ENCODE measurements at regions of chr3 and their contacts with region 1.

Region 1: GRCh38 chr3:171829841-171830517 is 13.2 kb upstream of the TMEM212 start:
- H3K4me3 Mint-ChIP-seq: no peak overlapping the region
- H3K27ac Mint-ChIP-seq: peak overlapping the region; percentile 39
- H3K4me1 Mint-ChIP-seq: peaks cover 37% of the 10 kb centered on the region
- H3K27me3 Mint-ChIP-seq: no peaks in the 10 kb centered on the region

Region 2: DNA sequence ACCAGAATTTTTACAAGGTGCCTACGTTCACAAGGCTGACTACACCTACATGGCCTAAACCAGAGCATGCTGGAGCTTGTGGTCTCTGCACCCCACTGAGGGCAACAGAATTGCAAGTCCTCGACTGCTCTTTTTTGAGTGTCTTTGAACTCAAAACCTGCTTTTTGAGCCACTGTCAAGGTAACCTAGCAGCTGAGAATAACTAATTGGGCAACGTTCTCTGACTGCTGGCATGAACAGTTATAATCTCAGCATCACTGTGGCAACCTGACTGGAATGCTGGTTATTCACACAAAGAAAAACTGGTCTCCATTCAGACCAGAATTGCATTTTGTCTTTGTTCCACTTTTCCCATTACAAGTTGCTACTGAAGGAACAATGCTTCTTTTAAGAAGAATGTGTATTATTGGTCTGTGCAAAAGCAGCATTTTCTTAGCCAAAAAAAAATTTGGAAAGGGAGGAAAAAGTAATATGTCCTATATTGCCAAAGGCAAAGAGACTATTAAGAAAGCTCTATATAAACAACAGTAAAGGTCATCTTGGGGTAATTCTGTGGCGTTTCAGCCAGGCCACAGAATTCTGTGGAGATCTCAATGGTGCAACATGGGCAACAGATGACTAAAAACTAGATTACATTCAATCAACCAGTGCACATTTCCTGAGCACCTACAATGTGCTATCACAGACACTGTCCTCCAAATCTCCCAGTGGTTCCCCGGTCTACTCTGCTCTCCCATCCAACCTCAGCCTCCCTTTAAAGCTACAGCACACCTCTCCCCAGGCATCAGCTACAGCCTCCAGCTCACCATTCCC is 446.6 kb before region 1 on chr3:
- intact Hi-C with region 1: no loop called
- H3K4me3 Mint-ChIP-seq: no peak overlapping the region
- H3K27ac Mint-ChIP-seq: no peak overlapping the region
- H3K4me1 Mint-ChIP-seq: peaks cover 16% of the 10 kb centered on the region
- H3K27me3 Mint-ChIP-seq: no peaks in the 10 kb centered on the region

Region 3: GRCh38 chr3:171748064-171748918 is 81.7 kb before region 1 on chr3:
- intact Hi-C with region 1: no loop called
- H3K4me3 Mint-ChIP-seq: no peak overlapping the region
- H3K27ac Mint-ChIP-seq: no peak overlapping the region
- H3K4me1 Mint-ChIP-seq: peaks cover 28% of the 10 kb centered on the region
- H3K27me3 Mint-ChIP-seq: no peaks in the 10 kb centered on the region

Region 4: GRCh38 chr3:171781711-171782127 is 48.3 kb before region 1 on chr3:
- intact Hi-C with region 1: loop called (anchors 5 kb)
- H3K4me3 Mint-ChIP-seq: no peak overlapping the region
- H3K27ac Mint-ChIP-seq: no peak overlapping the region
- H3K4me1 Mint-ChIP-seq: peaks cover 15% of the 10 kb centered on the region
- H3K27me3 Mint-ChIP-seq: no peaks in the 10 kb centered on the region

Region 5: DNA sequence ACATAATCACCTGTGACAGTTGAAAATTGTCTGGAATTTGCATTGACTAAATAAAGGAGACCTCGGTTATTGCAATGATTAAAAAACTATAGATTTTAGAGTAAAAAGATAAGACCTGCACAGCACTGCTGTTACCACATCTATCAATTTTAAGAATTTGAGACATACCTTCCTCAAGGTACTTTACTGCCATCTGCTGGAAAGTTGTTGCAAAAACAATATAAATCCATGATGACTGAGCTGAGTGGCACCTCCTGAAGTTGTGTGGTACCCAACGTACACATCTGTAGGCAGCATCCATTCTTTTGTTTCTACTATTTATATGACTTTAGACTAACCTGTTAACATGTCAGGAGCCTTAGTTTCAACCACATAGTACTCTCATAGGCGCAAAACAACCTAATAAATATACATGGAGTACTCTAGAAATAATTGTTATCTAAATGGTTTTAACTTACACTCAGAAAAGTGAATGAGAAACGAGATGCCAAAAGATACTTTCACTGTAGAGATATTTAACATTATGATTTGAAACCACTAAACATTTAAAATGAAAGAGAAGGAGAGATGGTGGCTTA is 511.6 kb after region 1 on chr3:
- intact Hi-C with region 1: loop called (anchors 10 kb)
- H3K4me3 Mint-ChIP-seq: no peak overlapping the region
- H3K27ac Mint-ChIP-seq: no peak overlapping the region
- H3K4me1 Mint-ChIP-seq: no peaks in the 10 kb centered on the region
- H3K27me3 Mint-ChIP-seq: no peaks in the 10 kb centered on the region